ENCODE measurements at regions of chr12 and their contacts with region 1.

Region 1: GRCh38 chr12:54337280-54337842 is 12.4 kb downstream of the COPZ1 start:
- DNase-seq: no peak
- H3K4me3 ChIP-seq: no peak overlapping the region
- H3K27ac ChIP-seq: no peak overlapping the region
- H3K4me1 ChIP-seq: no peaks in the 10 kb centered on the region
- H3K27me3 ChIP-seq: no peaks in the 10 kb centered on the region
- CTCF ChIP-seq: no peak

Region 2: DNA sequence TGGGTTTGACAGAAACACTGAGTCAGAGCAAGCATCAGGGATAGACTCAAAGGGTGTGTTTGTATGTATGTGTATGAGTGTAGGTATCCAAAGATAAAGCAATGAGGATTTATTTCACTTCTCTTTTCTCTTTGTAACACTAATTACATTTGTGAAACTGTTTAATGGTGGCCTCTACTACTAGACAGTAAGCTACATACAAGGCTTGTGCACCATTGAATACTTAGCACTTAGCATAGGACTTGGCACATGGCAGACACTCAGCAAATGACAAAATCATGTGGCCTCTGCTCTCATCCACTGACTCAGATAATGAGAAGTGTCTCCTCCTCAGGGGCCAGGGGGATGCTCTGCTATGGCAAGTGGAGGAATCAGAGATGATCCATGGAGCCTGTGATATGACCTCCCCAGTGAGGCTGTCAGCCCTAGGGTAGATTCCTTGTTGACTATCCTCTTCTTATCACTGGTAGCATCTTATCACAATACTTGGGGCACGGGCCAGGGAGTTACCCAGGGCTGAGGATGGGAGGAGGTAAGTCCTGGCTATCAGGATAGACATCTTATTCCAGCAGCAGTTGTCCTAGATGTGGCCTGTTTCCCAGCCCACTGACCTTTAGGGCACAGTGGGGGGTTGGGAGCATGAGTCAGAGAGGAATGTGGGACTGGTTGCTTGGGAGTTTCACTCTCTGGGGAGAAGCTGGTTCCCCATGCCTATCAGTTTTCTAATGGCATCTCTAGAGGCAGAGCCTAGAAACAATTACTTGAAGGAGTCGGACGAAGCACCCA is 470.0 kb before region 1 on chr12:
- CTCF ChIA-PET with region 1: no interaction called
- dilution Hi-C with region 1: no loop called
- in situ Hi-C with region 1: no loop called
- intact Hi-C with region 1: no loop called
- DNase-seq: peak; percentile 66
- H3K4me3 ChIP-seq: no peak overlapping the region
- H3K27ac ChIP-seq: peak overlapping the region; percentile 70
- H3K4me1 ChIP-seq: peaks cover 49% of the 10 kb centered on the region
- H3K27me3 ChIP-seq: no peaks in the 10 kb centered on the region
- CTCF ChIP-seq: no peak

Region 3: GRCh38 chr12:54220092-54220557 is 117.2 kb before region 1 on chr12:
- CTCF ChIA-PET with region 1: interaction called, 26 read pairs
- dilution Hi-C with region 1: no loop called
- in situ Hi-C with region 1: no loop called
- intact Hi-C with region 1: no loop called
- DNase-seq: peak; percentile 79
- H3K4me3 ChIP-seq: no peak overlapping the region
- H3K27ac ChIP-seq: no peak overlapping the region
- H3K4me1 ChIP-seq: peaks cover 44% of the 10 kb centered on the region
- H3K27me3 ChIP-seq: no peaks in the 10 kb centered on the region
- CTCF ChIP-seq: peak; percentile 79 to 86

Measured in mammary epithelial cell (primary cell).